Activated T-helper 1 cell treated with anti-CD3 and anti-CD28 coated beads, Interleukin-12 subunit alpha, Interleukin-12 subunit beta, Interleukin-2, Interleukin-4 antibody, amounts not matched to agents 30 ng/mL and 10 ng/mL and 1 ng/mL, durations not matched to agents 14 hours and 24 hours and 36 hours (primary cell): ENCODE measurements at regions of chr3 and their contacts with region 1.

Region 1: DNA sequence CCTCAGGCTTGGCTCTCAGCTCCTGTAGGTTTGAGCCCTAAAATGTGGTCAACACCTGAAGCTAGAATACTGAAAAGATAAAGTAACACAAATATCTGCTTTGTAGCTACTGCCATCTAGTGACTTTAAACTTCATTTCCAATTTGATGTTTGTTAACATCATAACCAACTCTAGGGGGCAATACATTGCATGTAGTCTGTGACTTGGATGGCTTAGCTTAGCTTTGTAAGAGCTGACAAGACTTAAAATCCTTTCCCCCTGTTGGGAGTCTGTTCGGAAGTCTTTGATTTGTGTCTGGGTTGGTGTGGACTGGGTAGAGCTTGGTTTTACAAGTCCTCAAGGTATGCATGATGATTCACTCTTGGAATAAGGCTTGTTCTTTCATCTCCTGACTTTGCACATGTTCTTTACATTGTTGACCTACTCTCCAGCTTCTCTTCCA is 51.7 kb downstream of the SCN11A start:
- DNase-seq: no peak
- H3K4me3 Mint-ChIP-seq: no peak overlapping the region
- H3K27ac Mint-ChIP-seq: no peak overlapping the region
- H3K4me1 Mint-ChIP-seq: no peaks in the 10 kb centered on the region
- H3K27me3 Mint-ChIP-seq: peaks cover 21% of the 10 kb centered on the region

Region 2: DNA sequence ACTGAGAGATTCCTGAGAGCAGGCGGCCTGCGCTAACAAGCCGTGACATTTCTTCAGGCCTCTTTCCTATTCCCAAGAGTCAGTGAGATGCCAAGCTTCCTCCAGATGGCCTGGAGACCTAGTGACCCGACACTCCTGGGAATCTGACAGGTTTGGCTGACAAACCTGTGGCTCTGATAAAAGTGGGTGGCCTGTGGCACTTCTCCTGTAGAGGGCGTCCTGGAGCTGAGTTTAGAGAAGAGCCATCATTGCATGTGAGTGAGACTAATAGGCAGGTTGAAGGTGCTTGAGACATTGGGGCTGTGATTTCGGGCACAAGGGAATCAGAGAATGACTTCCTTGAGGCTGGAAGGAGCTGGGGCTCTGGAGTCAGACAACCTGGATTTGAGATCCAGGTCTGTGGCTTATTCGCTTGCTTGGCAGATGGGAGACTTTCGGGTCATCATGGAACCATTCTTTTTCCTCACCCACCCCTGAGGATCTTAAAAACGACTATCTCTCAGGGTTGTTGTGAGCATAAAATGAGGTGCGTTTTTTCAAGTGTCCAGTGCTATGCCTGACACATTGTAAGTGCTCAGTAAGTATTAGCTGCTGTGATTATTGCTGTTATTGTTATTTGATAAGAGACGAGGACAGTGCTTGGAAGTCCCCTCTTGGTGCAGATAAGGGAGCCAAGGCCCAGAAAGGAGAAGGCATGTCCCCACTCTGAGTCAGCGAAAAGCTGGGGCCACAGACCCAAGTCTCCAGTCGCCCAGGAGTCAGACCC is 261.2 kb before region 1 on chr3:
- intact Hi-C with region 1: loop called (anchors 1 kb)
- DNase-seq: peak; percentile 4
- H3K4me3 Mint-ChIP-seq: no peak overlapping the region
- H3K27ac Mint-ChIP-seq: no peak overlapping the region
- H3K4me1 Mint-ChIP-seq: no peaks in the 10 kb centered on the region
- H3K27me3 Mint-ChIP-seq: peaks cover 5% of the 10 kb centered on the region

Region 3: GRCh38 chr3:39361252-39361927 is 361.4 kb after region 1 on chr3:
- intact Hi-C with region 1: no loop called
- DNase-seq: peak; percentile 71
- H3K4me3 Mint-ChIP-seq: peak overlapping the region; percentile 69
- H3K27ac Mint-ChIP-seq: peak overlapping the region; percentile 85
- H3K4me1 Mint-ChIP-seq: peaks cover 75% of the 10 kb centered on the region
- H3K27me3 Mint-ChIP-seq: peaks cover 10% of the 10 kb centered on the region

Region 4: GRCh38 chr3:40187945-40188344 is 1187.9 kb after region 1 on chr3:
- intact Hi-C with region 1: no loop called
- DNase-seq: no peak
- H3K4me3 Mint-ChIP-seq: no peak overlapping the region
- H3K27ac Mint-ChIP-seq: no peak overlapping the region
- H3K4me1 Mint-ChIP-seq: no peaks in the 10 kb centered on the region
- H3K27me3 Mint-ChIP-seq: peaks cover 6% of the 10 kb centered on the region